Calu3 (cell line): ENCODE measurements at regions of chr1 and their contacts with region 1.

Region 1: GRCh38 chr1:86380257-86380861 is 15.8 kb downstream of the ODF2L start:
- DNase-seq: no peak
- H3K4me3 Mint-ChIP-seq: no peak overlapping the region
- H3K27ac Mint-ChIP-seq: no peak overlapping the region
- H3K4me1 Mint-ChIP-seq: no peaks in the 10 kb centered on the region
- H3K27me3 Mint-ChIP-seq: no peaks in the 10 kb centered on the region
- CTCF ChIP-seq: peak; percentile 58

Region 2: DNA sequence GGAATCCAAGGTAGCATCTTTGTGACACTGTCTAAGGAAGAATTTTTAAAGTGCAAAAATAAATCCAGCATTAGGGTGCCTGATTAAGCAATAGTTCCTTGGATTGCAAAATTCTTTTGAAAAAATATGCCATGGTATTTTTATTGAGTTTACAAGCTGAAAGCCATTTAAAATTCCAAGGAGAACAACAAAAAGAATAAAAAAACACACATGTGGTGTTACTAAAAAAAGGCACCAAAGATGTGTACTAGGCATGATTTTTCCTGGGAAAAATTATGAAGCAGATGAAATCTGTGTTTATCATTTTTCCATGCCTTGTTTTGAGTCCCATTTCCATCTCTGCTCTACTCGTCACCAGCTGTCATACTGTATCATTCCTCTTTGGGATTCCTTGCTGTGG is 515.1 kb before region 1 on chr1:
- CTCF ChIA-PET with region 1: no interaction called
- intact Hi-C with region 1: no loop called
- DNase-seq: no peak
- H3K4me3 Mint-ChIP-seq: no peak overlapping the region
- H3K27ac Mint-ChIP-seq: no peak overlapping the region
- H3K4me1 Mint-ChIP-seq: peaks cover 24% of the 10 kb centered on the region
- H3K27me3 Mint-ChIP-seq: peaks cover 3% of the 10 kb centered on the region
- CTCF ChIP-seq: no peak

Region 3: GRCh38 chr1:86231076-86231475 is 149.3 kb before region 1 on chr1:
- CTCF ChIA-PET with region 1: no interaction called
- intact Hi-C with region 1: no loop called
- DNase-seq: no peak
- H3K4me3 Mint-ChIP-seq: no peak overlapping the region
- H3K27ac Mint-ChIP-seq: no peak overlapping the region
- H3K4me1 Mint-ChIP-seq: no peaks in the 10 kb centered on the region
- H3K27me3 Mint-ChIP-seq: peaks cover 28% of the 10 kb centered on the region
- CTCF ChIP-seq: no peak

Region 4: GRCh38 chr1:86502721-86503405 is 122.5 kb after region 1 on chr1:
- CTCF ChIA-PET with region 1: interaction called, 5 read pairs
- intact Hi-C with region 1: loop called (anchors 1 kb)
- DNase-seq: peak; percentile 46
- H3K4me3 Mint-ChIP-seq: peak overlapping the region; percentile 76
- H3K27ac Mint-ChIP-seq: peak overlapping the region; percentile 21
- H3K4me1 Mint-ChIP-seq: peaks cover 26% of the 10 kb centered on the region
- H3K27me3 Mint-ChIP-seq: peaks cover 14% of the 10 kb centered on the region
- CTCF ChIP-seq: no peak

Region 5: DNA sequence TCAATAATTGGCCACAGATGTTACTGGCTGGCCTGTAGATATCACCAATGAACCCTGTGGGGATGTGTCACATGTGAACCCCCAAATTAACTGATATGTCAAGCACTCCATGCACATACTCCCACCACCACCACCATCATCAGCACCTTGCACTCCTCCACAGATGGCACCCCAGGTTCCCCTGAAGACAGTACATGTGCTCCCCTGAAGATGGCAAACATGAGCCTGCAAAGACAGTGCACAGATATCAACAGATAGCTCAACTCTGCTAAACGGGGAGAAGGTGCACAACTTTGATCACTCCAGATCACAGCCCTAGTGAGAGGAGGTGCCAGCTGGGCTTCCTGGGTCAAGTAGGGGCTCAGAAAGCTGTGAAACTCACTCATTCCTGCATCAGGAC is 240.9 kb after region 1 on chr1:
- CTCF ChIA-PET with region 1: no interaction called
- intact Hi-C with region 1: no loop called
- DNase-seq: no peak
- H3K4me3 Mint-ChIP-seq: no peak overlapping the region
- H3K27ac Mint-ChIP-seq: no peak overlapping the region
- H3K4me1 Mint-ChIP-seq: peaks cover 9% of the 10 kb centered on the region
- H3K27me3 Mint-ChIP-seq: no peaks in the 10 kb centered on the region
- CTCF ChIP-seq: no peak

Region 6: DNA sequence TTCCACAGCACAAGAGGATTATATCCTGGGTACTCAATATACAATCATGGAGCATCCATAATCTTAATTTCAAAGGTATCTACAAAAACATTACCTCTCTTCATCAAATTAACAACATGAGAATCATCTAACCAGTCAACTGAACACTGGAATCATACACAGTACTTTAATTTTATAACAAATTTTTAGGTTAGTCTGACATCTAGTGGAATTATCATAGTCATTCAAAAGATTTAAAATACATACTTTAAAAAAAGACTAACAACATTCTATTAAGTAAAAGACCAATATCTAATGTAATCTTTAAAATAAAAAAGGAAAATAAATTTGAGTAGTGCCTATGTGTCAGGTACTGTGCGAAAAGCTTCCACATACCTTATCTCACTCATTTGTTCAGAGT is 307.2 kb after region 1 on chr1:
- CTCF ChIA-PET with region 1: no interaction called
- intact Hi-C with region 1: loop called (anchors 10 kb)
- DNase-seq: no peak
- H3K4me3 Mint-ChIP-seq: no peak overlapping the region
- H3K27ac Mint-ChIP-seq: no peak overlapping the region
- H3K4me1 Mint-ChIP-seq: no peaks in the 10 kb centered on the region
- H3K27me3 Mint-ChIP-seq: no peaks in the 10 kb centered on the region
- CTCF ChIP-seq: no peak

Region 7: GRCh38 chr1:87149666-87150065 is 769.3 kb after region 1 on chr1:
- CTCF ChIA-PET with region 1: no interaction called
- intact Hi-C with region 1: no loop called
- DNase-seq: no peak
- H3K4me3 Mint-ChIP-seq: no peak overlapping the region
- H3K27ac Mint-ChIP-seq: no peak overlapping the region
- H3K4me1 Mint-ChIP-seq: peaks cover 28% of the 10 kb centered on the region
- H3K27me3 Mint-ChIP-seq: no peaks in the 10 kb centered on the region
- CTCF ChIP-seq: no peak